ENCODE measurements at regions of chr15 and their contacts with region 1.

Region 1: DNA sequence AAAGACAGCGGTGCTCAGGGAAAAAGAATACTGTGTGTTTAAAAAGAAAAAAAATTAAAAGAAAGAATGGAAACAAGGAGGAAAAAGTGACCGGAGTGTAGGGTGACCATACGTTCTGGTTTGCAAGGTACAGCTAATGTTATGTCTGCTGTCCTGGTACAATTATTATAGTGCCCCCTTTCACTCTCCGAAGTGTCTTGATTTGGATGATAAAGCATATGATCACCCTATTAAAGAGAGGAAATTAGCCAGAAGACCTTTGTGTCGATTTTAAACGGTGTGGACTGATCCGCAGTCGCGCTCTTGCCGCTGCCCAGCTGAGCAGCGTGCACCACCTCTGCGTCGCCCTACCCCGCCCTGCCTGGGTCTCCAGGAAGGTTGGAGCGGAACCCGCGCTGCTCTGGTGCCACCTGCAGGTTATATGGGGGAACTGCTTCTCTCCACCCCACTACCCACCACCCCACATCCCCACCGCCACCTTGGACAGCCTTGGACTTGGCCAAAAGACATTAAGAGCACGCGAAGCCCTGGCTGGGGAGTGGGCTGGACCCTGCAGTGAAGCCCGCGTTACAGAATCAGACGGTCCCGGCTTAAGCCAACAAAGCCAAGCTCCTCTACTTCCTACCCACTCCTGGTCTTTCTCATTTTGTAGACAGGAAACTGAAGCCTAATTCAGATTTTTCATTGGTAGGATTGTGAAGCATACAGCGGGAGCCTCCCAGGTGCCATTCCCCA is 41.2 kb upstream of the UBE2Q2 start:
- DNase-seq: peak; percentile 74
- H3K4me3 Mint-ChIP-seq: peak overlapping the region; percentile 48
- H3K27ac Mint-ChIP-seq: no peak overlapping the region
- H3K4me1 Mint-ChIP-seq: peaks cover 9% of the 10 kb centered on the region
- H3K27me3 Mint-ChIP-seq: peaks cover 59% of the 10 kb centered on the region

Region 2: GRCh38 chr15:75684642-75685041 is 117.4 kb before region 1 on chr15:
- intact Hi-C with region 1: loop called (anchors 1 kb)
- DNase-seq: no peak
- H3K4me3 Mint-ChIP-seq: no peak overlapping the region
- H3K27ac Mint-ChIP-seq: no peak overlapping the region
- H3K4me1 Mint-ChIP-seq: no peaks in the 10 kb centered on the region
- H3K27me3 Mint-ChIP-seq: no peaks in the 10 kb centered on the region

Region 3: GRCh38 chr15:75732809-75733451 is 69.1 kb before region 1 on chr15:
- intact Hi-C with region 1: loop called (anchors 1 kb)
- DNase-seq: peak; percentile 27
- H3K4me3 Mint-ChIP-seq: no peak overlapping the region
- H3K27ac Mint-ChIP-seq: no peak overlapping the region
- H3K4me1 Mint-ChIP-seq: peaks cover 5% of the 10 kb centered on the region
- H3K27me3 Mint-ChIP-seq: peaks cover 21% of the 10 kb centered on the region

Region 4: DNA sequence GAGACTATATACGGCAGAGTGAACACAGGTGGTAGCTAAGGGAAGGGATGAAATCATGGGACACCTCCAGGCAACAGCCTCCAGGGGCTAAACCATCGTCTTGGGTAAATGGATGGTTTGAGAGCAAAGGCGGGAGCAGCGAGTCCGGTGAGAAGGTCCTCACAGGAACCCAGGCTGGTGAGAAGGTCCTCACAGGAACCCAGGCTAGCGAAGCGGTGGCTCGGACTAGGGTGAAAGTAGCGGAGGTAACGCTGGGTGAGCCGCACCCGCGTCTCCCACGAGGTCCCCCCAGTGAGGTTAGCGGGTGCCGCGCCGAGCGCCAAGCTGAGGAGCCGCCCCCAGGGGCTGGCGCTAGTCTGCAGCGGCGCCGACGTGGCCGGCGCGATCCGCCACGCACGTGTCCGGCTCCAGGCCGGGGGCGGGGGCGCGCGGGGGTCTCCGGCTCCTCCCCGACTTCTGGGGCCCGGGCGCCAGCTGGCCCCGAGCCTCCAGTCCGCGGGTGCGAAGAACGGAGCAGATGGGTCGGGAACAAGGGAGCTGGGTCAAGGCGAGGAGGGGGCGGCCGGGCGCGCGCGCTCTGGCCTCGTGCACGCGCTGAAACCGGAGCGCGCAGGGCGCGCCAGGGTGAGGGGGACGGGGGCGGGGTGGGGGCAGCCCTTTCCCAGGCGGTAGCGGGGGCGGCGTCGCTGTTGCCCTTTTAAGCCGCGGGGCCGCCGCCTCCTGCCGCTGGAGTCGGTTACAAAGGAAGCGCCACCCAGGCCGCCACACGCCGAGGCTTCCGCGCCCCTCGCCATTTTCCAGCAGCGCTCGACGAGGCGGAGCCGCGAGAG is 40.9 kb after region 1 on chr15 and contains the start of gene UBE2Q2:
- intact Hi-C with region 1: loop called (anchors 1 kb)
- DNase-seq: peak; percentile 68
- H3K4me3 Mint-ChIP-seq: peak within 1 kb of the TSS; percentile 99
- H3K27ac Mint-ChIP-seq: peak within 1 kb of the TSS; percentile 93
- H3K4me1 Mint-ChIP-seq: peaks cover 50% of the 10 kb centered on the region
- H3K27me3 Mint-ChIP-seq: peaks cover 13% of the 10 kb centered on the region
- total RNA-seq, gene UBE2Q2: 20.5 and 20.9 TPM in 2 replicates

Region 5: GRCh38 chr15:75921729-75922703 is 120.0 kb after region 1 on chr15:
- intact Hi-C with region 1: loop called (anchors 5 kb)
- DNase-seq: no peak
- H3K4me3 Mint-ChIP-seq: no peak overlapping the region
- H3K27ac Mint-ChIP-seq: peak overlapping the region; percentile 20
- H3K4me1 Mint-ChIP-seq: peaks cover 33% of the 10 kb centered on the region
- H3K27me3 Mint-ChIP-seq: no peaks in the 10 kb centered on the region

Region 6: DNA sequence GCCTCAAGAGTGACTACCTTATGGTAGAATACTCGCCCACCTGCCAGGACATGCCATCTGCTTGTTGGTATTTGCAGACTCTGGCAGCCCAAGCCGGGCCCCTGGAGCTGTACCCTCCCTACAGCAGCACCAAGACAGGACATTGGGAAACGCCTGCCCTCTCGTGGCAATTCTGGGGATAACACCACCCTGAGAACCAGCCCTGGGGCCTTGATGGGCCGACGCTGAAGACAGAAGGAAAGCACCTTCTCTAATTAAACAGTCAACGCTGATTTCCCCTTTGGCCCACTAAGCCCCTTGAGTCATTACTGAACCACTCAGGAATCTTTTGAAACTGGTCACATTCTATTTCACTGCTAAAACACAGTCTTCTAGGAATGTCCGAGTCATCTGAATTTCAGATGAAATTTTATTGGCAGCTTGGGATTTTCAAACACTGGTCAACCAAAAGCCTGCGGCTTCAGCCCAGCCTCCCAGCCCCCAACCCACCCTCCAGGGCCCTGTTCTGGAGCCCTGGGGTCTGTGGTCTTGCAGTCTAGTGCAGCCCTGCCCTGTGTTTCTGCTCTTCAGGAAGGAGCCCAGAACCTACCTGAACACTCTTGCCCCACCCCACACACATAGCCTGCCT is 349.1 kb after region 1 on chr15:
- intact Hi-C with region 1: loop called (anchors 5 kb)
- DNase-seq: peak; percentile 60
- H3K4me3 Mint-ChIP-seq: no peak overlapping the region
- H3K27ac Mint-ChIP-seq: no peak overlapping the region
- H3K4me1 Mint-ChIP-seq: no peaks in the 10 kb centered on the region
- H3K27me3 Mint-ChIP-seq: peaks cover 22% of the 10 kb centered on the region

Measured in activated T-helper 1 cell treated with anti-CD3 and anti-CD28 coated beads, Interleukin-12 subunit alpha, Interleukin-12 subunit beta, Interleukin-2, Interleukin-4 antibody, amounts not matched to agents 30 ng/mL and 10 ng/mL and 1 ng/mL, durations not matched to agents 14 hours and 24 hours and 36 hours (primary cell).